IMR-90 (cell line): ENCODE measurements at regions of chr5 and their contacts with region 1.

Region 1: GRCh38 chr5:72108202-72109061 is 1.2 kb downstream of the MAP1B start:
- DNase-seq: peak; percentile 67
- ATAC-seq: peak; percentile 75
- H3K4me3 ChIP-seq: peak overlapping the region; percentile 97
- H3K27ac ChIP-seq: peak overlapping the region; percentile 86
- H3K4me1 ChIP-seq: peaks cover 12% of the 10 kb centered on the region
- H3K27me3 ChIP-seq: no peaks in the 10 kb centered on the region
- CTCF ChIP-seq: no peak
- POLR2A ChIP-seq: no peak
- RAD21 ChIP-seq: peak; percentile 28; the same call in 1 of the 2 replicates

Region 2: DNA sequence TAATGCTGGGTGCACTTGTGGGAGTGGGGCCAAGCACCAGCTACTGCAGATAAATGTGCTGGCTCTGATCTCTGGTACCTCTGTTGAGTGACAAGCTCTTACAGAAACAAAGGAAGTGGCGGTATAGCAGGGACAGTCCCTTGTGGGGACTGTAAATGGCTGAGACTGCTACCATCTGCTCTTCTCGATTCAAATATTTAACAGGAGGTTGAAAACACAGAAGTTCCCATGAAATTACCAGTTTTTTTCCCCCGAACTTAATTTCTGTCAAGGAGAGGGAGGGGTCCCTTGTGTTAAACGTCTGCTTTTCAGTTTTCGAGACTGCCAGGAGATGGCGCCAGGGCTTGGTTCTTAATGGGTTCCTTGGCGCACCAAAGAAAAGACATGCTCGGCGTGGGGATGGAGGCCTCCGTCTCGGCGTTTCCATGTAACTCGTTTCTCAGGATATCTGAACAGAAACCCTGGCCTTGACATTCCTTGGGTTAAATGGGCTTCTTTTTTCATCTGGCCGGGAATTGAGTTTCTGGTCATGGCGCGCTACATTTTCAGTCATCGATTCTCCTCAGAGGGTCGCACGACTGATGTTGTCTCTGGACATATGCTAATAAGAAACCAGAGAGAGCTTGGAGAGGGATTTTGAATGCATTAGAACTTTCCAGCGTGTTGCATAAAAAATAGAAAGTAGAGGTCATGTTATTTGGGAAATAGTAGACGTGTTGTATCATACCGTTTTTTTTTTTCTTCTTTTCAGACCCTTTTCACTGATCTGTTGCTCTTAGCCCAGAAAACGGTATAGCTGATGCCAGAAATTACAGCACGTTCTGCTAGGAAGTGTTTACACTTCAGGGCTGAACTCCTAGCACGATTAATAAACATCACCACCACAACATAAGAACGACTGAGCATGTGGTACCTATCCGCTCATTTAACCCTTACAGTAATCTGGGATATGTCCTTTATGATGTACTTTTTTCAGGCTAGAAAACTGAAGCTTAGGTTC is 325.4 kb before region 1 on chr5:
- CTCF ChIA-PET with region 1: no interaction called
- POLR2A ChIA-PET with region 1: no interaction called
- dilution Hi-C with region 1: no loop called
- in situ Hi-C with region 1: no loop called
- intact Hi-C with region 1: loop called (anchors 1 kb)
- DNase-seq: peak; percentile 75
- ATAC-seq: peak; percentile 95
- H3K4me3 ChIP-seq: peak overlapping the region; percentile 7; the same call in 1 of the 2 replicates
- H3K27ac ChIP-seq: 0 out of 2 replicates have a peak overlapping the region, but pooled peaks have one; percentile 7
- H3K4me1 ChIP-seq: peaks cover 2% of the 10 kb centered on the region; the same call in 1 of the 2 replicates
- H3K27me3 ChIP-seq: peaks cover 12% of the 10 kb centered on the region
- CTCF ChIP-seq: peak; percentile 85
- POLR2A ChIP-seq: 0 out of 2 replicates have a peak, but pooled peaks have one; percentile 40
- RAD21 ChIP-seq: peak; percentile 87

Region 3: GRCh38 chr5:72065751-72066255 is 42.6 kb before region 1 on chr5:
- CTCF ChIA-PET with region 1: no interaction called
- POLR2A ChIA-PET with region 1: no interaction called
- dilution Hi-C with region 1: no loop called
- in situ Hi-C with region 1: no loop called
- intact Hi-C with region 1: loop called (anchors 2 kb)
- DNase-seq: peak; percentile 50
- ATAC-seq: peak; percentile 36
- H3K4me3 ChIP-seq: no peak overlapping the region
- H3K27ac ChIP-seq: peak overlapping the region; percentile 3; the same call in 1 of the 2 replicates
- H3K4me1 ChIP-seq: peaks cover 13% of the 10 kb centered on the region
- H3K27me3 ChIP-seq: peaks cover 5% of the 10 kb centered on the region
- CTCF ChIP-seq: no peak
- POLR2A ChIP-seq: no peak
- RAD21 ChIP-seq: no peak